CD14-positive monocyte (primary cell): ENCODE measurements at regions of chr6 and their contacts with region 1.

Region 1: DNA sequence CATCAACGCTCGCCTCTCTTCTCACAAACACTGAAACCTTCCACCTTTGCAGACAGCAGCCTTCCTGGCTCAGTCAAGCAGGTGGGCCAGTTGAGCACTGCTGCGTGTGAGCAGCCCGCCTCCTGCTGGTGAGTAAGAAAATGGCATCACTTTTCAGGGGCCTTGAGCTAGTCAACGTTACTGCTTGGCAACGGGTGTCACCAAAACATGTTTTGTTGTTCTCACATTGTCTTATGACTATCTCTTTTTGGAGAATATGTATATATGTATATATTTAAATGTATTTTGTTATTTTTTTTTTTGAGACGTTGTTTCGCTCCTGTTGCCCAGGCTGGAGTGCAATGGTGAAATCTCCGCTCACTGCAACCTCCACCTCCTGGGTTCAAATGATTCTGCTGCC is 97.0 kb upstream of the AGPAT4 start:
- DNase-seq: peak; percentile 85 to 86 (median 85)
- H3K4me3 ChIP-seq: no peak overlapping the region
- H3K4me3 Mint-ChIP-seq: no peak overlapping the region
- H3K27ac ChIP-seq: peak overlapping the region in 1 of 2 donors; percentile 37
- H3K27ac Mint-ChIP-seq: peak overlapping the region; percentile 54 to 99 (median 95)
- H3K4me1 ChIP-seq: peaks cover 48 to 55% of the 10 kb centered on the region in 2 donors
- H3K4me1 Mint-ChIP-seq: peaks cover 40% of the 10 kb centered on the region
- H3K27me3 ChIP-seq: no peaks in the 10 kb centered on the region
- H3K27me3 Mint-ChIP-seq: peaks cover 0 to 5% (median 0%) of the 10 kb centered on the region in 3 donors
- CTCF ChIP-seq: peak; percentile 96

Region 2: GRCh38 chr6:160930547-160931377 is 440.1 kb before region 1 on chr6:
- intact Hi-C with region 1: loop called in 1 of 2 experiments (anchors 2 kb)
- DNase-seq: peak; percentile 31 to 52 (median 35)
- H3K4me3 ChIP-seq: peak overlapping the region in 1 of 3 experiments; percentile 57
- H3K4me3 Mint-ChIP-seq: peak overlapping the region; percentile 58 to 82
- H3K27ac ChIP-seq: no peak overlapping the region
- H3K27ac Mint-ChIP-seq: peak overlapping the region in 3 of 7 donors; percentile 19 to 46 (median 45)
- H3K4me1 ChIP-seq: peaks cover 8 to 10% of the 10 kb centered on the region in 2 donors
- H3K4me1 Mint-ChIP-seq: peaks cover 7% of the 10 kb centered on the region
- H3K27me3 ChIP-seq: peaks cover 8 to 11% of the 10 kb centered on the region in 2 donors
- H3K27me3 Mint-ChIP-seq: peaks cover 11 to 29% (median 15%) of the 10 kb centered on the region in 3 donors
- CTCF ChIP-seq: peak; percentile 88

Region 3: DNA sequence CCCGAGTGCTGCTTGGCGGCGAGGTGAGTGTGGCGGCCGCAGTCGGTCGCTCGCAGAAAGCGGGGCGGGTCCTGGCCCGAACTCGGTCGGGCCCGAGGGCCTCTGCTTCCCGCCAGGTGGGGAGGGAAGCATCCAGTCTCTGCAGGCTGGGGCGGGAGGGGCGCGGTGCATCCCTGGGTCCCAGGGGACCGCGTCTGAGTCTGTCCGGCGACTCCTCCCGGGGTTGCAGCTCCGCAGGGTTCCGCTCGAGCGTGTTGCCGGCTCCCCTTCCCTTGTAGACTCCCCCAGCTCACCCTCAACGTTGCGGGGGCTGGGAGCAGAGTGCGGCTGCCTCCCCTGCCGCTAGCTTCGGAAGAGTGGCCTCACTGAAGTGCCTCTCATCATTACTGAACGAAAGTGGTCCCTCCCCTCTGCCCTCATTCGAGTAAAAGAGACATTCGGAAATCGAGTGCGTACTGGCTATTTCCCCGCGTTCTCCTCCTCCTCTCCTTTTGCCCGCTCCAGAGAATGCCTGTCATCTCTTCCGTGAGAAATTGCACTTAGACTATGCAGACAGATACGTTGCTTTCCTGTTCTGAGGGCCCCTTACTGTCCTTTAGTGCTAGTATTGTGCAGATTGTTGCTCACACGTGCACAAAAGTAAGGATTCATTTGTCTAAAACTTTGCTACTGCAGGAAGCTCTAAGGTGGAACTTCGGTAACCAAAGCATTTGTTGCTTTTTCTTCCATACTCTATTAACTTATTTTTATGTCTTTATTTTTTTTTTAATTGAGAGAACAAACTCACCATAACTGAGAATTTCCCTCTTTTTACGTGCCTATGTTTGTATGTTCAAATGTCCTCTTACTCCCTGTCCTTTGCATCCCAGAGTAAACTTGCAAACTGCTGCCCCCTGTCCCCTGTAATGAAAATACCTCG is 378.6 kb before region 1 on chr6:
- intact Hi-C with region 1: loop called in 1 of 2 experiments (anchors 5 kb)
- DNase-seq: peak; percentile 11 to 46 (median 26)
- H3K4me3 ChIP-seq: peak overlapping the region; percentile 65 to 93 (median 84)
- H3K4me3 Mint-ChIP-seq: peak overlapping the region; percentile 85 to 95
- H3K27ac ChIP-seq: peak overlapping the region; percentile 45 to 80
- H3K27ac Mint-ChIP-seq: peak overlapping the region; percentile 69 to 92 (median 80)
- H3K4me1 ChIP-seq: peaks cover 22 to 36% of the 10 kb centered on the region in 2 donors
- H3K4me1 Mint-ChIP-seq: peaks cover 33% of the 10 kb centered on the region
- H3K27me3 ChIP-seq: peaks cover 3 to 5% of the 10 kb centered on the region in 2 donors
- H3K27me3 Mint-ChIP-seq: peaks cover 4 to 11% (median 6%) of the 10 kb centered on the region in 3 donors
- CTCF ChIP-seq: peak; percentile 49

Region 4: GRCh38 chr6:161101517-161101916 is 269.4 kb before region 1 on chr6:
- intact Hi-C with region 1: loop called in 1 of 2 experiments (anchors 5 kb)
- DNase-seq: peak in 1 of 3 donors; percentile 12
- H3K4me3 ChIP-seq: no peak overlapping the region
- H3K4me3 Mint-ChIP-seq: no peak overlapping the region
- H3K27ac ChIP-seq: no peak overlapping the region
- H3K27ac Mint-ChIP-seq: peak overlapping the region in 3 of 7 donors; percentile 6 to 67 (median 16)
- H3K4me1 ChIP-seq: no peaks in the 10 kb centered on the region
- H3K4me1 Mint-ChIP-seq: no peaks in the 10 kb centered on the region
- H3K27me3 ChIP-seq: no peaks in the 10 kb centered on the region
- H3K27me3 Mint-ChIP-seq: peaks cover 0 to 1% (median 0%) of the 10 kb centered on the region in 3 donors
- CTCF ChIP-seq: peak; percentile 47

Region 5: GRCh38 chr6:161117308-161117707 is 253.6 kb before region 1 on chr6:
- intact Hi-C with region 1: loop called (anchors 5 kb)
- DNase-seq: peak; percentile 95 to 99 (median 98)
- H3K4me3 ChIP-seq: no peak overlapping the region
- H3K4me3 Mint-ChIP-seq: peak overlapping the region in 1 of 2 donors; percentile 7
- H3K27ac ChIP-seq: peak overlapping the region; percentile 78 to 80
- H3K27ac Mint-ChIP-seq: peak overlapping the region; percentile 91 to 97 (median 94)
- H3K4me1 ChIP-seq: peaks cover 20% of the 10 kb centered on the region in 2 donors
- H3K4me1 Mint-ChIP-seq: peaks cover 24% of the 10 kb centered on the region
- H3K27me3 ChIP-seq: no peaks in the 10 kb centered on the region
- H3K27me3 Mint-ChIP-seq: no peaks in the 10 kb centered on the region
- CTCF ChIP-seq: no peak

Region 6: GRCh38 chr6:161242779-161243693 is 127.8 kb before region 1 on chr6:
- intact Hi-C with region 1: no loop called
- DNase-seq: peak; percentile 75 to 90 (median 79)
- H3K4me3 ChIP-seq: peak overlapping the region in 2 of 3 experiments; percentile 12 to 49
- H3K4me3 Mint-ChIP-seq: peak overlapping the region; percentile 73 to 90
- H3K27ac ChIP-seq: peak overlapping the region; percentile 69 to 75
- H3K27ac Mint-ChIP-seq: peak overlapping the region; percentile 67 to 96 (median 93)
- H3K4me1 ChIP-seq: peaks cover 13 to 14% of the 10 kb centered on the region in 2 donors
- H3K4me1 Mint-ChIP-seq: peaks cover 21% of the 10 kb centered on the region
- H3K27me3 ChIP-seq: no peaks in the 10 kb centered on the region
- H3K27me3 Mint-ChIP-seq: peaks cover 0 to 2% (median 0%) of the 10 kb centered on the region in 3 donors
- CTCF ChIP-seq: no peak

Region 7: GRCh38 chr6:161273752-161274487 is 97.0 kb before region 1 on chr6 and contains the start of gene AGPAT4:
- intact Hi-C with region 1: loop called (anchors 5 kb)
- DNase-seq: peak; percentile 95 to 98 (median 97)
- H3K4me3 ChIP-seq: peak within 1 kb of the TSS; percentile 49 to 94 (median 70)
- H3K4me3 Mint-ChIP-seq: peak within 1 kb of the TSS; percentile 85 to 95
- H3K27ac ChIP-seq: peak within 1 kb of the TSS; percentile 80 to 96
- H3K27ac Mint-ChIP-seq: peak within 1 kb of the TSS; percentile 96 to 99 (median 98)
- H3K4me1 ChIP-seq: peaks cover 12 to 15% of the 10 kb centered on the region in 2 donors
- H3K4me1 Mint-ChIP-seq: peaks cover 27% of the 10 kb centered on the region
- H3K27me3 ChIP-seq: peaks cover 5% of the 10 kb centered on the region in 2 donors
- H3K27me3 Mint-ChIP-seq: peaks cover 0 to 13% (median 0%) of the 10 kb centered on the region in 3 donors
- CTCF ChIP-seq: no peak
- polyA plus RNA-seq, gene AGPAT4: 6.4 to 15.8 (median 6.9) TPM

Region 8: DNA sequence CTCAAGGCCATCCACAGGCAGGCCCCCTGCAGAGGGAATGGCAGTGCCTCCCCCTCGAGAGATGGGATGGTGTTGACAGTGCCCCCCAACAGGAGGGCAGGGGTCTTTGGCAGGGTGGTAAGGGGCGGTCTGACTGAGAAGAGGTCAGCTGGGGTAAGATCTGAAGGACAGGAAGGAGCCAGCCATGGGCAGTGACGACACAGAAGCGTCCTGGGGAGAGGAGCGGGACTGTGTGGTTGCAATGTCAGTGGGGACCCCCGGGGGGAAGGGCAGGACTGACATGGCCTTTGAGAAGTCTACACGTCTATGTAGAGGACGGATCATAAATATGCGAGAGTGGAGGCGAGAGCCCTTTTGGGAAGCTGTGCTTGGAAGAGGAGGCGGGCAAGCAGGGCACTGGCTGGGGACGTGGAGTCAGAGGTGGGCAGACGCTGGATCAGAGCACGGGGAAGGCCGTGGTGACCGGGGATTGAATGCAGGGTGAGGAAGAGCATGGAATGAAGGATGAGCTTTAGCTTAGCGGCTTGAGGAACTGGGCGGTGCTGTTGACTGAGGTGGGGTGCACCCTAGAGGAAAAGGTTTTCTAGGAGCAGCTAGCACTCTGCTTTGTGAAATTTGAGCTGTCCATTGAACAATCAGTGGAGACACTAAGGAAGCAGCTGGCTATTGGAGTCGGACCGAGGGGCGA is 14.6 kb before region 1 on chr6:
- intact Hi-C with region 1: loop called in 1 of 2 experiments (anchors 2 kb)
- DNase-seq: peak in 2 of 3 donors; percentile 30 to 68
- H3K4me3 ChIP-seq: peak overlapping the region; percentile 41 to 58 (median 44)
- H3K4me3 Mint-ChIP-seq: peak overlapping the region; percentile 81 to 95
- H3K27ac ChIP-seq: peak overlapping the region; percentile 92 to 94
- H3K27ac Mint-ChIP-seq: peak overlapping the region; percentile 98 to 100 (median 99)
- H3K4me1 ChIP-seq: peaks cover 49 to 50% of the 10 kb centered on the region in 2 donors
- H3K4me1 Mint-ChIP-seq: peaks cover 59% of the 10 kb centered on the region
- H3K27me3 ChIP-seq: no peaks in the 10 kb centered on the region
- H3K27me3 Mint-ChIP-seq: peaks cover 0 to 4% (median 3%) of the 10 kb centered on the region in 3 donors
- CTCF ChIP-seq: no peak